Caco-2 (cell line): ENCODE measurements at regions of chr10 and their contacts with region 1.

Region 1: DNA sequence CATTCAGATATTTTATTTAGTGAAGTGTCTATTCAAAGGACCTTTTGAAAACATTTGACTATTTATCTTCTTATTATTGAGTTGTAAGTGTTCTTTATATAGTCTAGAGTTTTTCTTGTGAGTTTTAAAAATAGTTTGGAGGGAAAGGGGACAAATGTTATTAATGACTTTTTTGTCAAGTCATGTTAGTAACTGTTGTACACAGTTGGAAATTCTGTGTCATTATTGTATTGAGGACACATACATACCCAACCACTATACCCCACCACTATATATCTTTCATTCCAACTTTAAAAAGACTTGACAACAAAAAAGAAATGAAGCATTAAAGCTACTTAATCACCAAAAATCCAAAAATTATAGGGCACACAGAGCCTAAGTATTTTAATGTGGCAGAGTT is 53.2 kb upstream of the OIT3 start:
- DNase-seq: no peak
- H3K4me3 ChIP-seq: no peak overlapping the region
- H3K4me3 Mint-ChIP-seq: no peak overlapping the region
- H3K27ac Mint-ChIP-seq: no peak overlapping the region
- H3K4me1 ChIP-seq: no peaks in the 10 kb centered on the region
- H3K4me1 Mint-ChIP-seq: no peaks in the 10 kb centered on the region
- H3K27me3 ChIP-seq: no peaks in the 10 kb centered on the region
- H3K27me3 Mint-ChIP-seq: no peaks in the 10 kb centered on the region
- CTCF ChIP-seq: no peak

Region 2: DNA sequence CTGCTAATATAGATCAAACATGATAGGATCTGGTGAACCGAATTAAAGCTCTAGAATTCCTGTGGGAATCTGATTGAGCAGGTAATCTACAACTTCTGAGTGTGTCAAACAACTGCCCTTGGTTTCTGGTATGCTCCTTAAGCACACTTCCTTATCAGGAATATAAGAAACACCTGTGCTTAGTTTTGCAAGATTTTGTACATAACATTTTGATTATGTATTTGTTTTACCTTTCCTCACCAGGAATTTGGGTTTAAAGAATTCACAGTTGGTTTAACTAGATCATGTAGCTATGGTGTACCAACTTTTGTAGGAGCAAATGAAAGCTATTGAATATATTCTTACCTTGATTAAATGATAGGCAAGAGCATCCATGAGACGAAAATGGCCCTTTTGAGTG is 107.8 kb before region 1 on chr10:
- CTCF ChIA-PET with region 1: no interaction called
- POLR2A ChIA-PET with region 1: interaction called, 13 read pairs
- intact Hi-C with region 1: no loop called
- DNase-seq: no peak
- H3K4me3 ChIP-seq: no peak overlapping the region
- H3K4me3 Mint-ChIP-seq: no peak overlapping the region
- H3K27ac Mint-ChIP-seq: no peak overlapping the region
- H3K4me1 ChIP-seq: peaks cover 20% of the 10 kb centered on the region
- H3K4me1 Mint-ChIP-seq: peaks cover 25% of the 10 kb centered on the region
- H3K27me3 ChIP-seq: no peaks in the 10 kb centered on the region
- H3K27me3 Mint-ChIP-seq: no peaks in the 10 kb centered on the region
- CTCF ChIP-seq: no peak

Region 3: DNA sequence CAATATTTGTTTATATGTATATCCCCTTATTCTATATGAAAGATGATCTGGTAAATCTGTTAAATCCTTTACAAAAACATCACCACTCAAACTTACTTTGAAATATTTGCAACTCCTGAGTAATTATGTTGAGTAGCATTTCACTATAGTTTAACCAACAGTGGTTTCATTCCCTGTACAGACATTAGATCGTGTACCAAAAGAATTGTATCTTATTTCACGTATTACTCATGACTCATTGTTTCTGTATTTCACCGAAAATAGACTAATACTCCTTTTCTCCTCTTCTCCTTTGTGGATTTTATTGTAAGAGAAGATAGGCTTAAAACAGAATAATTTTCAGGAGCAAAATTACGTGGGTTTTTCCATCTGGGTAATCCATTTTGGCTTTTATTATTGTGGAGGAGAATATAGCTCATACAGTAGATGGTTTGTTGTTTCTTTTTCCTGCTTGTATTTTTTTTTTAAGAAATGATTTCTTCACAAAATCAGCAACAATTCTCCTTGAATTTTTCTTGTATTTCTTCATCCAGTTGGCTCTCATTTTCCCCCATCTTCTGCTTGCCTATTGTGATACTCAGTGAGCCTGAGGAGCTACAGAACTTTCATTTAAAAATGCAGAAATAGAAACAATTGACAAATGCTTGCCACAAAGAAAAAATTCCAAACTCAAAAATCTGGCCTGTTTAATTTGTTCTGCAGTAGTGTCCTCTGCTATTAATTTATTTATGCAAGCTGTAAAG is 37.4 kb before region 1 on chr10:
- CTCF ChIA-PET with region 1: no interaction called
- POLR2A ChIA-PET with region 1: no interaction called
- intact Hi-C with region 1: no loop called
- DNase-seq: no peak
- H3K4me3 ChIP-seq: no peak overlapping the region
- H3K4me3 Mint-ChIP-seq: no peak overlapping the region
- H3K27ac Mint-ChIP-seq: no peak overlapping the region
- H3K4me1 ChIP-seq: peaks cover 10% of the 10 kb centered on the region; the same call in 1 of the 2 replicates
- H3K4me1 Mint-ChIP-seq: no peaks in the 10 kb centered on the region
- H3K27me3 ChIP-seq: no peaks in the 10 kb centered on the region
- H3K27me3 Mint-ChIP-seq: no peaks in the 10 kb centered on the region
- CTCF ChIP-seq: no peak